GM13977 (cell line): ENCODE measurements at regions of chr11 and their contacts with region 1.

Region 1: DNA sequence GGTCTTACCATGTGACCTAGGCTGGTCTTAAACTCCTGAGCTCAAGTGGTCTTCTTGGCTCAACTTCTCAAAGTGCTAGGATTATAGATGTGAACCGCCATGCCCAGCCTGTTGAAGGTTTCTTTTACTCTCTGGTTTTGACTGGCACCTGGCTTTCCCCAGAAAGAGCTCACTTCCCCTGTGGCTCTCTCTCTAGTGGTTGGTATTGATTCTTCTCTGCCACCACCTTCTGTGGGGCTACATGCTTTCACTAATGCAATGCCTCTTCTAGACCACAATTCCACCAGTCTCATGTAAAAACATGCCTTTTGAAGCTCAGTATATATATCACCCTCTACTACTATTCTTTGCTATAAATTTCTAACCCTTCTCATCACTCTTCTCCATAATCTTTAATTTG is 67.2 kb downstream of the CCDC83 start:
- DNase-seq: no peak
- CTCF ChIP-seq: no peak

Region 2: DNA sequence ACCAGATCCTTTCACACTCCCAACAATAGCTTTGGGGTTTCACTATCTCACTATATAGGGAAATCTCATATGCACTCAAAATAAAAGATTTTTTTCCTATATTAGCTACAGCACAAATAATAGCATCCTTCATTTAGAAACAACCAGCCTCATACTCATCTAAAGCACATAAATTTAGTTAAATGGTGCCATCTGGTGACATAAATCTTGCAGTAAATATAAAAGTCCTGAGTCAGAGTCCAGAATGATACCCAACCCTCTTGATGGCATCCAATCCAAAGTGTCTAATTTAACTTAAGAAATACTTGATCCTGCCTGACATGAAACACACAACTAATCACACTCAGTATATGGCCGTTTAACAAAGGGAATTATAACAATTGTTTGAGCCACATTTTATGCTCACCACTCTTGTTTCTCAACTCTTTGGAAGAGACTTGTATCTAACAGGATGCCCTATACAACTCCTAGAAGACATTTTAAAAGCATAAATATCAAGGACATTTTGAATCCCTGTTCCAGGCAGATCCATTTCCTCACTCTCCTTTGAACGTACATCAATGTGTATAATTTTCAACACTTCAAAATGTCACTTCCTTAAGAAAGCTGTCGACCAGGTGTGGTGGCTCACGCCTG is 331.4 kb before region 1 on chr11:
- in situ Hi-C with region 1: no loop called
- DNase-seq: peak; percentile 8
- CTCF ChIP-seq: peak; percentile 29

Region 3: DNA sequence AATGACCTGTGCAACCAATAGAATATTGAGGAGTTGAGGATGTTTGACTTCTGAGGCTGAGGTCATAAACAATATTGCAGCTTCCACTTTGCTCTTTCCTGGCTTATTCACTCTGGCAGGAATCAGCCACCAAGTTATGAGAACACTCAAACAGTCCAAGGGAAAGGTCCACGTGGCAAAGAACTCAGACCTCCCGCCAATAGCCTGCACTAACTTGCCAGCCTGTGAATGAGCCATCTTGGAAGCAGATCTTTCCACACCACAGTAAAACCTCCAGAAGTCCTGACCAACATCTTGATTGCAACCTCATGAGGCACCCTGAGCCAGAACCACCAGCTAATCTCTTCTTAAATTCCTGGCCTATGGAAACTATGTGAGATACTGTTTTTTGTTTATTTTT is 169.2 kb after region 1 on chr11:
- in situ Hi-C with region 1: no loop called
- DNase-seq: no peak
- CTCF ChIP-seq: no peak

Region 4: DNA sequence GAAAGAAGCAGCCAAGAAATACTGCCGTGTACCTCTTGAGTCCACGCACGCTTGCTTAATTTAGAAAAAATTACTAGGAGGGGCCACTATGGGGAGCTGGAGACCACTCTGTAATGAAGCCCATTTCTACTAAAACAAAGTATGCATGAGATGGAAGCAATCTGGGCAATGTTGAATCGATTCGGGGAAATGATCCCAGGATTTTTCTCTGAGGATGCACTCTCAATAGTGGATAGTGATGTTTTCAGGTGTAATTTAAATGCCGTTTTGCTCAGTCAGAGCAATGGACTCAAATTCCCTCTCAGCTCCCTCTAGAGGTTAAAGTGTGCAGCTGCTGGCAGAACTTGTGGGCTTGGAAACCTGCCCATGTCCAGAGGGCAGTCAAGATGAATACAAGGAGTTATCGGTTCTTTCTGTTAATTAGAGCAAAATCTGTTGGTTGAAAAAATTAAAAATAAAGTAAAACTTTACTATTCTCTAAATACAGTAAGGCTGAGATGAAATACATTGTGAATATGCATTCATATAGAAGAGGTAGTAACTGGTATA is 686.0 kb after region 1 on chr11:
- in situ Hi-C with region 1: loop called (anchors 25 kb)
- DNase-seq: peak; percentile 50
- CTCF ChIP-seq: peak; percentile 88